ENCODE measurements at regions of chr21 and their contacts with region 1.

Region 1: DNA sequence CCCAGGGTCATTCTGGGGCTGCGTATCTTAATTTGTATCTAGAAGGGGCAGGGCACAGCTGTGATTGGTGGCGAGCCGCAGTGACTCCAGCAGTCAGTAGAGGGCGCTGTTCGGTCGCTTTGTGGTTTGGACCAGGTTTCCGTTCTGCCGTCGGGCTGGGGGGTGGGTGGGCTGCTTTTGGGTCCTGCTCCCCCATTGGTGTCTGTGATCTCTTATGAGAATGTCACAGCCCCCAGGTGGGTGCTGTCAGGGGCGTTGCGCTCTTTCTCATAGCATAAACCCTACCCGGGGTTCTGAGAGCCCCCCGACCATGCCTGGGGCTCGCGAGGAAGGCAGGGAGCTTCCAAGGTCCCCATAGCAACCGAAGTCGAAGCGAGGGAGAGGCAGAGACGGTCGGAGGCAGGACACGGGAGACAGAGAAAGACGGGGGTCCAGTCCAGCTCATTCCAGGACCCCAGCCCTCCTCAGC is 5.4 kb downstream of the TFF3 start:
- DNase-seq: peak; percentile 73
- H3K4me3 ChIP-seq: no peak overlapping the region
- H3K27ac ChIP-seq: no peak overlapping the region
- H3K4me1 ChIP-seq: peaks cover 15% of the 10 kb centered on the region
- CTCF ChIP-seq: peak; percentile 91

Region 2: GRCh38 chr21:42288962-42289361 is 20.8 kb before region 1 on chr21:
- CTCF ChIA-PET with region 1: no interaction called
- POLR2A ChIA-PET with region 1: no interaction called
- intact Hi-C with region 1: no loop called
- DNase-seq: no peak
- H3K4me3 ChIP-seq: no peak overlapping the region
- H3K27ac ChIP-seq: no peak overlapping the region
- H3K4me1 ChIP-seq: peaks cover 19% of the 10 kb centered on the region
- CTCF ChIP-seq: no peak

Region 3: DNA sequence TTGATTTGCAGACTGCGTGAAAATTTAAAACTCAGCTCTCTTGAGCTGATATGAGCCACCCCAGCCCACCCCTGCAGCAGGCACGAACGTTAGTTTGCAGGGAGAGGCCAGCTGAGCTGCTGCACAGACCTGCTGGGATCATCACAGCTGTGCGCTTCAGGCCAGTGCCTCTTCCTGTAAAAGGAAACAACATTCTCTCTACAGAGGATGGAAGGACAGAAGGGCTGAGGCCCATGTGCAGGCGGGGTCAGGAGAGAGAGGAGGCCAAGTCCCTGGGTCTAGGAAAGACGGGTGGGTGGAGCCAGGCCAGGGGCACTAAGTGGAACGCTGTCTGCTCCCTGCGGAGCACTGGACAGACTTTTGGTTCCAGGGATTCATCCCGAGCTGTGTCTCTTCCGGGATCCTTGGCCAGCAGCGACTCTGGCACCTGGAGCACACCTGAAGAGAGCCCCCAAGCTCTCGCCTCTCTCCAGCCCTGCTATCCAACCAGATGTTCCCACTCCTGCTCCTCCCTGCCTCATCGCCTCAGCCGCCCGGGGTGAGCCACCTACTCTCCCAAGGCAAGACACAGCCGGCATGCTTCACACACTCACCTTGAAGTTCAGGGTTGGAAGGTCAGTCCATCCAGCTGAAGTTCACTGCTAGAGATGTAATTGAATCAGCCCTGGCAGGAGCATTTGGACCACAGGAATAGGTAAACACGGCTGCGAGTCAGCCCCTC is 143.9 kb after region 1 on chr21:
- CTCF ChIA-PET with region 1: no interaction called
- POLR2A ChIA-PET with region 1: interaction called, 3 read pairs
- intact Hi-C with region 1: loop called (anchors 1 kb)
- DNase-seq: no peak
- H3K4me3 ChIP-seq: no peak overlapping the region
- H3K27ac ChIP-seq: no peak overlapping the region
- H3K4me1 ChIP-seq: peaks cover 29% of the 10 kb centered on the region
- CTCF ChIP-seq: no peak